Left colon (tissue), 2 donors: ENCODE measurements at regions of chr3 and their contacts with region 1.

Region 1: DNA sequence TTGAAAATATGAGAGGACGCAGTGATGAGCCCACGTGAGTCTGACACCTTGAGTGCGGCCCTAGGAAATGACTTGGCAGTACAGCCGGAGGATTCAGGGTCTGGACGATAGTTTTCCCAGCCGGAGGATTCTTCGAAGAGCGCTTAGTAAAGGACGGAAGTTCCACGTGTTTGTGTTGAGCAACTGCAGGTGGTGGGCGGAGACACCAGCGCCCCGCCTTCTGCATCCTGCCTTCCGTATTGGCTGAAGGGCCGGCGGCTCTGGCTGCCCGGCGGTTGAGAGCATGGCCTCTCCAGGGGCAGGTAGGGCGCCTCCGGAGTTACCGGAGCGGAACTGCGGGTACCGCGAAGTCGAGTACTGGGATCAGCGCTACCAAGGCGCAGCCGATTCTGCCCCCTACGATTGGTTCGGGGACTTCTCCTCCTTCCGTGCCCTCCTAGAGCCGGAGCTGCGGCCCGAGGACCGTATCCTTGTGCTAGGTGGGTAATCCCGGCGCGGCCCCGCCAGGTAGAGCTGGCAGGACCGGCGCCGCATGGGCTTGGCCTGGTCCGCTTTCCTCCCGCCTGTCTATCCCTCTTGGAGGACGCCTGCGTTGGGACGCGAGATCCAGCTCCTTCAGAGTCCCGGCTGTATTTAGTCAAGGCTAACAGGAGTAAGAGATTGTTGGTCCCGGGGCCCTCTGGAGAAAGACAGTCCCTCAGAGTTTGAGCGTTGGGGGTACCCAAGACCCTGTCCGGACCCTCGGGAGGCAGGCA is at the start of gene EEF1AKMT4:
- DNase-seq: peak; percentile 97
- ATAC-seq: peak; percentile 96
- total RNA-seq, gene EEF1AKMT4: 3.5 to 5.3 TPM

Region 2: GRCh38 chr3:184135149-184135910 is 114.3 kb before region 1 on chr3 and contains the start of gene EIF2B5:
- intact Hi-C with region 1: loop called in 1 of 2 experiments (anchors 10 kb)
- DNase-seq: peak; percentile 92 to 93
- ATAC-seq: peak; percentile 91
- total RNA-seq, gene EIF2B5: 32.6 to 40.8 TPM